Activated CD4-positive, alpha-beta memory T cell treated with anti-CD3 and anti-CD28 coated beads for 36 hours (primary cell): ENCODE measurements at regions of chr2 and their contacts with region 1.

Region 1: GRCh38 chr2:101473911-101474701 is 806 bp downstream of the RFX8 start:
- DNase-seq: peak; percentile 65
- H3K4me3 Mint-ChIP-seq: peak overlapping the region; percentile 80
- H3K27ac Mint-ChIP-seq: peak overlapping the region; percentile 82
- H3K4me1 Mint-ChIP-seq: peaks cover 7% of the 10 kb centered on the region
- H3K27me3 Mint-ChIP-seq: peaks cover 2% of the 10 kb centered on the region

Region 2: GRCh38 chr2:100984892-100985379 is 489.2 kb before region 1 on chr2:
- CTCF ChIA-PET with region 1: no interaction called
- POLR2A ChIA-PET with region 1: no interaction called
- intact Hi-C with region 1: no loop called
- DNase-seq: peak; percentile 82
- H3K4me3 Mint-ChIP-seq: no peak overlapping the region
- H3K27ac Mint-ChIP-seq: no peak overlapping the region
- H3K4me1 Mint-ChIP-seq: peaks cover 2% of the 10 kb centered on the region
- H3K27me3 Mint-ChIP-seq: peaks cover 2% of the 10 kb centered on the region

Region 3: DNA sequence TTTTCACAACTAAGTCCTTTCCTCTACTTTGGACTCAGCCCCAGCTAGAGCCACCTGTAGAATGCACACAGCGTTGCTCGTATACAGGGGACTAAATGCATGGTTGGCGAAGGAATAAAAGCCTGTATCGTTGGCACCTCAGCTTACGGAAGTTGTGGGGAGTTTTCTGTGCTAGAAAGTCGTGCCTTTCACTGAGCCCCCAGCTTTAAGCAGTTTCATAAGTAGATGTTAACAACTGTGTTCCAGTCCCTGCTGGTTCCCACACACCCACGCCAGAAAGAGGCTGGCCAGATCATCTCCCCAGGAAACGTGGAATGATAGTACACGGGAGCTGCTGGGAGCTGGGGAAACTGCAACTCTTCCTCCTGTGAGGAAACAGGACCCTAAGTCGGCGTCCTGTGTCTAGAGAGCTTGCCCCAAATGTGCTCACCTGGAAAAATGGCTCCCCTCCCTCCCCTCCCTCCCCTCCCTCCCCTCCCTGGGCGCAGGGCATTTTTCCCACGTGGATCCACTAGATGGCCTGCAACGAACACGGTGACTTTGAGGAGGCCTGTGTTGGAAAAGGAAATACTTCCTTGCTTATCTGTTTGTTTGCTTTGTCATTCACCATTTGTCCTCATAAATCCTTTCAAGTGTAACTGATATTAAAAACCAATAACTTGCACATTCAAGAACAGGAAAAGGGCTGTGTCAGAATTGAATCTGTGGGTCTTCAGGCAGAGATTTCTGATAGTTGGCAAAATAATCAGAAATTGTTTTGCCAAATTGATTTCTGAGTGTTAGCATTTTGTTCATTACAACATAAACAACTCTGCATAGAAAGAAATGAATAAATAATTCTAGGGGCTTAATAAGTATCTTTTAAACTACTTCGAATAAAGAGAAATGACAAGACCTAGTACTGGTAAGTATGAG is 44.7 kb after region 1 on chr2:
- CTCF ChIA-PET with region 1: no interaction called
- POLR2A ChIA-PET with region 1: no interaction called
- intact Hi-C with region 1: loop called (anchors 2 kb)
- DNase-seq: no peak
- H3K4me3 Mint-ChIP-seq: no peak overlapping the region
- H3K27ac Mint-ChIP-seq: no peak overlapping the region
- H3K4me1 Mint-ChIP-seq: peaks cover 28% of the 10 kb centered on the region
- H3K27me3 Mint-ChIP-seq: no peaks in the 10 kb centered on the region

Region 4: GRCh38 chr2:101759162-101759561 is 285.1 kb after region 1 on chr2:
- CTCF ChIA-PET with region 1: no interaction called
- POLR2A ChIA-PET with region 1: no interaction called
- intact Hi-C with region 1: loop called (anchors 5 kb)
- DNase-seq: no peak
- H3K4me3 Mint-ChIP-seq: no peak overlapping the region
- H3K27ac Mint-ChIP-seq: no peak overlapping the region
- H3K4me1 Mint-ChIP-seq: peaks cover 67% of the 10 kb centered on the region
- H3K27me3 Mint-ChIP-seq: no peaks in the 10 kb centered on the region